Posterior vena cava (tissue), 2 donors: ENCODE measurements at regions of chr12 and their contacts with region 1.

Region 1: GRCh38 chr12:108570743-108571608 is 8.6 kb downstream of the ISCU start:
- DNase-seq: peak; percentile 45

Region 2: GRCh38 chr12:108618079-108618952 is 47.3 kb after region 1 on chr12:
- intact Hi-C with region 1: loop called (anchors 5 kb)
- DNase-seq: peak; percentile 94

Region 3: GRCh38 chr12:109020796-109021380 is 449.9 kb after region 1 on chr12 and contains the start of gene SVOP:
- intact Hi-C with region 1: no loop called
- DNase-seq: peak; percentile 94
- total RNA-seq, gene SVOP: not detected